Ascending aorta (tissue), 2 donors: ENCODE measurements at regions of chr19 and their contacts with region 1.

Region 1: GRCh38 chr19:13150187-13150930 is at the starts of genes IER2 and STX10:
- DNase-seq: peak; percentile 86 to 98
- H3K4me3 ChIP-seq: peak within 1 kb of the TSS; percentile 92 to 97
- H3K27ac ChIP-seq: peak within 1 kb of the TSS; percentile 99
- H3K4me1 ChIP-seq: peaks cover 5 to 8% of the 10 kb centered on the region in 2 donors
- H3K27me3 ChIP-seq: no peaks in the 10 kb centered on the region
- CTCF ChIP-seq: peak; percentile 47 to 56 (median 55)
- total RNA-seq, gene IER2: 907 TPM
- total RNA-seq, gene STX10: 31.6 TPM

Region 2: DNA sequence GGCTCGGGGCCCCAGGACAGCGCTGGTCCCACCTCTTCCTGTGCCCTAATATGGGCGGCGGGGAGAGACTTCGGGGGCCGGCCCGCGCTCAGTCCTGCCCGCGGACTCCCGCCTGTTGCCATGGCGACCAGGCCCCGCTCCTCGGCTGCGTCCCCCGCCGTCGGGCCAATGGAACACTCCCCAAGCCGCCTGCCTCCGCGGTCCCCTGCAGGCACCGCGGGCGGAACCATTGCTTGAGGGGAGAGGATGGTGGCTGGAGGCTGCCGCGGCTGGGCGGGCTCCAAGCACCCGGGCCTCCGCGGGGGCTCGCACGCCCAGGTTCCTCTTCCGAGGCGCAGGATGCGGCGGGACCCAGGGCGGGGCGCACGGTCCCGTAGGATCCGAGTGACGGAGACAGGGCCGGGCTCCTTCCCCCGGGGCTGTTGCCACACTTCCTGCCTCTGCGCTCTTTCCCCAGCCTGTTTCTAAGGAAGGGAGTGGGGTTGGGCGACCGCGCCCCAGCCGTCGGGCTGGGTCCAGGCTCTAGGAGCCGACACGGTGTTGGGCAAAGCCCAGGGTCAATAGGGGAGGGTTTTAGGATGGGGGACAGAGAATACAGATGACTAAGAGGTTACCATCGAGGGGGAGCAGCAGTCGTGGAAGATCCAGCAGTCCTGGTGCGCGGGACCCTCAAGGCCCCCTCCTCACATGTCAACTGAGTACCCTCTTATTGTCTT is 360.3 kb before region 1 on chr19:
- intact Hi-C with region 1: loop called (anchors 2 kb)
- DNase-seq: peak; percentile 92 to 98
- H3K4me3 ChIP-seq: peak overlapping the region; percentile 83 to 90
- H3K27ac ChIP-seq: peak overlapping the region; percentile 95 to 96
- H3K4me1 ChIP-seq: peaks cover 31 to 41% of the 10 kb centered on the region in 2 donors
- H3K27me3 ChIP-seq: no peaks in the 10 kb centered on the region
- CTCF ChIP-seq: no peak

Region 3: GRCh38 chr19:13093407-13094105 is 56.8 kb before region 1 on chr19:
- intact Hi-C with region 1: no loop called
- DNase-seq: peak in 1 of 2 donors; percentile 94
- H3K4me3 ChIP-seq: no peak overlapping the region
- H3K27ac ChIP-seq: peak overlapping the region; percentile 93 to 94
- H3K4me1 ChIP-seq: peaks cover 45 to 59% of the 10 kb centered on the region in 2 donors
- H3K27me3 ChIP-seq: no peaks in the 10 kb centered on the region
- CTCF ChIP-seq: peak; percentile 90 to 98 (median 94)

Region 4: DNA sequence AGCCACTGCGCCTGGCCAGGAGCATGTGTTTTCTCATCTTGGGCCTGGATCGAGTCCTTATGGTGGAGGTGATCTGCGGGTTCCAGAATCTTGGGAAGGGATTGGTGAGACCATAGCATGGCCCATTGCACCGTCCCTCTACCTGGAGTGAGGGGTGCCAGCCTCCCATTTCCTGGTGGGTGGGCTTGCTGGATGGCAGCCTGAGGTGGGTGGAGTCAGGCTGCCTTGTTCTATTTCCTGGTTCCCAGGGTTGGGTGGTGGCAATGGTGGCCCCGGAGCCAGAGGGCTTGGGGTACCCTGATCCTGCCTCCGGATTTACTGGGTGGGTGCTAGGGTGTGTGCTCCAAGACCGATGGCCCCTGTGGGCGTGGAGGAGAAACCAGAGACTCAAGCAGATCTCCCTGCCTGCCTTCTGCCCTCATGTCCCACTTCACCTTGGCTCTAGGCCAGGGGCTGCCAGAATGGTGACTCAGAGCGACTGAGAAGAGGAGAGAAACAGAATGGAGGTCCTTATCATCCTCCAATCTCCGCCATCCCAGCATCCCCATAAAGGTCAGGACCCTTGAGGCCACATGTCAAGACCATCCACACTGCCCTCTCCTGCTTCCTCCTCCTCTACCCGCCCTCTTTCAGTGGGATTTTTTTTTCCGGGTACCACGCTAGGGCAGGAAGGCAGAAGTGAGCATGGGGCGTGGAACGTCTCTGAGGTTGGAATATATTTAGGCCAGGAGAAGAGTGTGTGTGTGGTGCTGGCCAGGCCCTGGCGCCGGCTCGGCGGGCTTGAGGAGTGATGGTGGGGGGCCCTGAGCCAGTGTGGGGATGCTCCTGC is 21.9 kb after region 1 on chr19:
- intact Hi-C with region 1: loop called (anchors 1 kb)
- DNase-seq: peak; percentile 80 to 95
- H3K4me3 ChIP-seq: peak overlapping the region in 1 of 2 donors; percentile 37
- H3K27ac ChIP-seq: peak overlapping the region; percentile 88 to 90
- H3K4me1 ChIP-seq: peaks cover 2 to 22% of the 10 kb centered on the region in 2 donors
- H3K27me3 ChIP-seq: no peaks in the 10 kb centered on the region
- CTCF ChIP-seq: no peak

Region 5: DNA sequence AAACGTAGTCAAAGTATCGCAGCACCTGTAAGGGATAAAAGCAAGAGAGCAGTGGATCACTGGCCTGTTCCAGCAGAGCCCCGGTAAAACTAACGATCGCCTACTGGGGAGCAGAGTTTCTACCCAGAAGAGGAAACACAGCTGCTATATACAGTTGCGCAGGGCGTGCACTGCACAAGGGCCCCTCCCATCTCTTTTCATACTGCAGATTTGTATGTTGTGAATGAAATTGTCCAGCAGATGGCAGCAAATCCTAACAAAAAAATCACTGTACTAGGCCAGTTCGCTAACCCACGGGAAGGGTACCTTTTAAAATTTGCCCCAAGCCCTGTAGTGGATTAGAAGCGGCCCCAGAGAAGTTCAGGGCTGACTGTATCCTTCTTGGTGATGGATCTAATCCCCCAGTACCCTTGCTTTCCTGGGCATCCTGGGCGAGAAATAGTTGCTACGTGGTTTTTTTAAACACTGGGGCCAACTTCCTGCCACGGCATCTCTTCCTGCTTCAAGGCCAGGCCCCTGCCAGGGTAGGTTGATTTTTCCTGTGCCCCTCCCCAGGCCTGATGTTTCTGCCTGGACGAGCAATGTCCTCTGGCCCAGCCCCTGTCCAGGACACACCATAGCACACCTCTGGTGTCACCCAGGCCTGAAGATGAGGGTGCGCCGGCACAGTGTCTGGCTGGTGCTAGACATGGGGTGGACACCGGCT is 126.9 kb after region 1 on chr19:
- intact Hi-C with region 1: no loop called
- DNase-seq: peak in 1 of 2 donors; percentile 75
- H3K4me3 ChIP-seq: no peak overlapping the region
- H3K27ac ChIP-seq: no peak overlapping the region
- H3K4me1 ChIP-seq: no peaks in the 10 kb centered on the region
- H3K27me3 ChIP-seq: no peaks in the 10 kb centered on the region
- CTCF ChIP-seq: peak; percentile 56 to 81 (median 76)

Region 6: DNA sequence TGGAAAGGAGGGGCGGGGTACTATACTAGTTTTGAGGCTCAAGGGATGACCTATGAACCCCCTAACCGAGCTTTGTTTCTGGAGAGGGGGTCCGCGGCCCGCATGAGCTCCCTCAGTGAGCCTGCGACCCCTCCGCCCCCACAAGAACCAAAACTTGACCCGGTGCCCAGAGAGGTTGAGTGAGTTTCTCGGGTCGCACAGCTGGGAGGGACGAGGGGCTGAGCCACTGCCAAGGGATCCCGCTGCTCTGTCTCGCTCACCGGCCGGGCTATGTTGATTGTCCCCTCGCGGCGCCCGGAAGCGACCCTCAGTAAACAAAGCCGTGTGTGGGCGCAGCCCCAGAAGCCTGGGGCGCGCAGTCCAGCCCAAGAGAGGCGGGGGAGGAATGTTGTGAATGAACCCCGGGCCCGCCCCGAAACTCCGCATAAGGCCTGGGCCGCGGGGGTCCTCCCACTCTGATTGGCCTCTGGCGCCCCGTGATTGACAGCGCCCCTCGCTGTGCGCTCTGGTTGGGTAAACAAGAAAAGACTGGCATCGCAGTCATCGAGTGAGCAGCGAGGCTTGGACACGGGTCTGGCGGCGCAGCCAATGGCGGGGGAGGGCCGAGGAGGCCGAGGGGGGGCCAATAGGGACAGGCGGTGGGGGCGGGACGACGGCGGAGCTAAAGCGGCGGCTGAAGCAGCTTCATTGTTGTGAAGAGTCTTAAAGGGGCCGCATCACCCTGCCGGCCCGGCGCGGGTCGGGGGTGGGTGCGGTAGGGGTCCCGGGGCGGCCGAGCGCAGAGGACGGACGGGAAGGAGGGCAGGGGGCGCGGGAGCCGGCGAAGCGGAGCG is 644.6 kb after region 1 on chr19 and contains the start of gene ZSWIM4:
- intact Hi-C with region 1: loop called (anchors 5 kb)
- DNase-seq: peak; percentile 98 to 100
- H3K4me3 ChIP-seq: peak within 1 kb of the TSS; percentile 86 to 88
- H3K27ac ChIP-seq: peak within 1 kb of the TSS; percentile 92 to 96
- H3K4me1 ChIP-seq: peaks cover 7 to 30% of the 10 kb centered on the region in 2 donors
- H3K27me3 ChIP-seq: no peaks in the 10 kb centered on the region
- CTCF ChIP-seq: no peak
- total RNA-seq, gene ZSWIM4: 23.2 TPM

Region 7: GRCh38 chr19:14073261-14073924 is 923.0 kb after region 1 on chr19:
- intact Hi-C with region 1: loop called (anchors 5 kb)
- DNase-seq: peak in 1 of 2 donors; percentile 83
- H3K4me3 ChIP-seq: peak overlapping the region; percentile 62 to 73
- H3K27ac ChIP-seq: peak overlapping the region; percentile 90 to 94
- H3K4me1 ChIP-seq: peaks cover 0 to 12% of the 10 kb centered on the region in 2 donors
- H3K27me3 ChIP-seq: no peaks in the 10 kb centered on the region
- CTCF ChIP-seq: peak in 1 of 3 experiments; percentile 97